ENCODE measurements at regions of chr22 and their contacts with region 1.

Region 1: DNA sequence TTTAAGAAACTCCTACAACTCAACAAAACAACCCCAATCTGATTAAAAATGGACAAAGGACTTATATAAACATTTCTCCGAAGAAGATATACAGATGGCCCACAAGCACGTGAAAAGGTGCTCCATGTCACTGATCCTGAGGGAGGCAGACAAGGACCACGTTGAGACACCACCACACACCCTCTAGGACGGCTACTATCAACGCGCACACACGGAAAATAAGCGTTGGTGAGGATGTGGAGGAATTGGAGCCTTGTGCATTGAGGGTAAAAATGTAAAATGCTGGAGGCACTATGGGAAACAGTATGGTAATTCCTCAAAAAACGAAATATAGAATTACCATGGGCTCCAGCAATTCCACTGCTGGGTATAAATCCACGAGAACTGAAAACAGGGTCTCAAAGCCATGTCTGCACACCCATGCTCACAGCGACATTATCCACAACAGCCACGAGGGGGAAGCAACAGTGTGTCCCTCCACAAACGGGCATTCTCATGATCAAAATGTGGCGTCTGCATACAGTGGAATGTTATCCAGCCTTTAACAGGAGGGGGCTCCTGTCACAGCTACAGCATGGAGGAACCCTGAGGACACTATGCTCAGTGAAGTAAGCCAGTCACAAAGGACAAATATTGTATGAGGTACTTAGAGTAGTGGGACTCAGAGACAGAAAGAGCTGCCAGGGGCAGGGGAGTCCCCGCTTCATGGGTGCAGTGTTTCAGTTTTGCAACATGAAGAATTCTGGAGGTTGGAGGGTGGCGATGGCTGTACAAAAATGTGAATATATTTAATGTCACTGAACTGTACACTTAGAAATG is 22.5 kb downstream of the YPEL1 start:
- DNase-seq: peak; percentile 22 to 61 (median 44)
- ATAC-seq: peak; percentile 92
- H3K4me3 ChIP-seq: no peak overlapping the region
- H3K4me3 Mint-ChIP-seq: peak overlapping the region in 5 of 10 donors; percentile 39 to 66 (median 50)
- H3K27ac ChIP-seq: no peak overlapping the region
- H3K27ac Mint-ChIP-seq: no peak overlapping the region
- H3K4me1 ChIP-seq: peaks cover 0 to 4% of the 10 kb centered on the region in 2 donors
- H3K4me1 Mint-ChIP-seq: peaks cover 0 to 6% (median 5%) of the 10 kb centered on the region in 7 donors
- H3K27me3 ChIP-seq: no peaks in the 10 kb centered on the region
- H3K27me3 Mint-ChIP-seq: no peaks in the 10 kb centered on the region

Region 2: DNA sequence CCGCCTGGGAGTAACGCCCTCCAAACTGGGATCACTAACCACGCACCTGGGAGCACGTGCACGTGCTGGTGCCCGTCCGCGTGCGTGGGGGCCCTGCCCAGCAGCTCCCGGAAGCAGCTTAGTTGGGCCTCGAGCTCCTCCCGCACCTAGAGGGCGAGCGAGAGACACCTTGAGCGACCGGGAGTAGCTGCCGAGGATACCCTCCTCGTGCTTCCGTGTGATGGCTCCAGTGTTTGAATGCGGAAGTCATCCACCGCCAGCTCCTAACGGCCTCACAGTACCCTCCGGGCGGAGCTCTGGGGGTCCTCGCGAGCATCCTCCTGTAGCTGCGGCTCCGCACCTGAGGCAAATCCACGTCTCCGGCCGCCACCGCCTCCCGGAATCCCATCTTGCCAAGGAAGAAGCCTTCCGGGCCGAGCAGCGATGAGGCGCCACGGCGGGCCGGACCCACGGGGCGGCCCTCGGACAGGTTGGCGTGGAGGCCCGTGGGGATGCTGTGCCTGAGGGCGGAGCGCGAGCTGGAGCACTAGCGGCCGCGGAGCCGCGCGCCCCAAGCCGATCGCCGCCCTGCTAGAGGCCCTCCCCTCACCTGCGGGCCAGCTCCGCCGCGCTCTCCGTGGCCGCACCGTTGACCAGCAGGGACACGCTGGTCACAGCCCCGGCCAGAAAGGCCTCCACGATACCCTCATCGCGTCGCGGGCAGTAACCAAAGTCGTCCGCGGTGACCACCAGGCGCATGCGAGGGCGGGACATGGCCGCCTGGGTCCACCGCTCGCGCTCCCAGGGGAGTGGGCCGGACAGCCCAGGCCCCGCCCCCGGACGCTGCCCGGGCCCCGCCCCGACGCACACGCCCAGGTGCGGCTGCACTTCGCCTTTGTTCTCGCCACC is 83.6 kb before region 1 on chr22 and contains the start of gene YDJC:
- CTCF ChIA-PET with region 1: no interaction called
- POLR2A ChIA-PET with region 1: no interaction called
- intact Hi-C with region 1: no loop called
- DNase-seq: peak; percentile 88 to 97 (median 93)
- ATAC-seq: peak; percentile 95
- H3K4me3 ChIP-seq: peak within 1 kb of the TSS; percentile 88
- H3K4me3 Mint-ChIP-seq: peak within 1 kb of the TSS; percentile 87 to 97 (median 91)
- H3K27ac ChIP-seq: peak within 1 kb of the TSS; percentile 92
- H3K27ac Mint-ChIP-seq: peak within 1 kb of the TSS; percentile 84 to 97 (median 93)
- H3K4me1 ChIP-seq: peaks cover 6 to 26% of the 10 kb centered on the region in 2 donors
- H3K4me1 Mint-ChIP-seq: peaks cover 29 to 44% (median 38%) of the 10 kb centered on the region in 7 donors
- H3K27me3 ChIP-seq: no peaks in the 10 kb centered on the region
- H3K27me3 Mint-ChIP-seq: no peaks in the 10 kb centered on the region
- total RNA-seq, gene YDJC: 29.0 to 56.0 (median 38.0) TPM

Region 3: GRCh38 chr22:21726650-21727049 is 13.5 kb after region 1 on chr22:
- CTCF ChIA-PET with region 1: no interaction called
- POLR2A ChIA-PET with region 1: interaction called, 5 read pairs
- intact Hi-C with region 1: loop called in 1 of 2 experiments (anchors 2 kb)
- DNase-seq: peak in 3 of 9 donors; percentile 11 to 36 (median 19)
- ATAC-seq: peak; percentile 82
- H3K4me3 ChIP-seq: no peak overlapping the region
- H3K4me3 Mint-ChIP-seq: no peak overlapping the region
- H3K27ac ChIP-seq: no peak overlapping the region
- H3K27ac Mint-ChIP-seq: no peak overlapping the region
- H3K4me1 ChIP-seq: peaks cover 0 to 11% of the 10 kb centered on the region in 2 donors
- H3K4me1 Mint-ChIP-seq: peaks cover 3 to 9% (median 6%) of the 10 kb centered on the region in 7 donors
- H3K27me3 ChIP-seq: no peaks in the 10 kb centered on the region
- H3K27me3 Mint-ChIP-seq: no peaks in the 10 kb centered on the region

Region 4: GRCh38 chr22:21766691-21767462 is 53.8 kb after region 1 on chr22:
- CTCF ChIA-PET with region 1: no interaction called
- POLR2A ChIA-PET with region 1: no interaction called
- intact Hi-C with region 1: loop called in 1 of 2 experiments (anchors 10 kb)
- DNase-seq: peak in 1 of 9 donors; percentile 68
- ATAC-seq: peak; percentile 82
- H3K4me3 ChIP-seq: peak overlapping the region; percentile 14
- H3K4me3 Mint-ChIP-seq: peak overlapping the region in 2 of 10 donors; percentile 39 to 59
- H3K27ac ChIP-seq: no peak overlapping the region
- H3K27ac Mint-ChIP-seq: peak overlapping the region in 8 of 9 donors; percentile 36 to 80 (median 57)
- H3K4me1 ChIP-seq: peaks cover 0 to 66% of the 10 kb centered on the region in 2 donors
- H3K4me1 Mint-ChIP-seq: peaks cover 6 to 61% (median 20%) of the 10 kb centered on the region in 7 donors
- H3K27me3 ChIP-seq: no peaks in the 10 kb centered on the region
- H3K27me3 Mint-ChIP-seq: no peaks in the 10 kb centered on the region

Region 5: DNA sequence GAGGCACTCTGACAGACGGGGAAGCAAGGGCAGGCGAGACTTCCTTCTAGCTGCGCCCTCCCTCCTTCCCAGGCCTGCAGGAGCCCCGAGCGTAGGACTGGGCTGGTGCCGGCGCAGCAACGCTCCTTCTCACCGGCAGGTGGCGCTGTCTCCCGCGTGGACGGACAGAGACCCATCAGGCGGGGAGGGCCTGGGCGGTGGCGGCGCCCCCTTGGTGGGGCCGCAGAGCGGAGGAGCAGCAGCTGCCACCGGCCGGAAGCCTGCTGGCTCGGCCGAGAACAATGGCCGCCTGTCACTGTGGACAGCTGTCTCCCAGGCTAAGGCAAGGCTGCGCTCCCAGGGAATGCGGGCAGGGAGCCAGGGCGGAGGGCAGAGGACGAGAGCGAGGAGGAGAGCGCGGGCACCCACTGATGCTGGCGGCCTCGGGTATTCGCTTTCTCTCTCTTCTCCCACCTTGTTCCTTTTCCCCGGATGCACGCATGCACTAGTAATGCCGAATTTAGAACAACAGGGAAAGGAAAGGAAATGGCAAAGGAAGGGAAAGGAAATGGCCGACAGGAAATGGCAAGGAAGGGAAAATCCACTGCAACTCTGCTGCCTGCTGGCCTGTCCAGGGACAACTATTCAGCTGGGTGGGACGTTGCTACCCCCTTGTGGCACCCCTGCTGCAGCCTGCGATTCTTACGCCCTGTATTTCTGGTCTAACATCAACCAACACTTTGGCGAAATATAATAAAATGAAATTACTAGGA is 225.1 kb after region 1 on chr22:
- CTCF ChIA-PET with region 1: interaction called, 3 read pairs
- POLR2A ChIA-PET with region 1: no interaction called
- intact Hi-C with region 1: loop called (anchors 1 to 5 kb)
- DNase-seq: peak; percentile 76 to 95 (median 87)
- ATAC-seq: peak; percentile 94
- H3K4me3 ChIP-seq: peak overlapping the region; percentile 69
- H3K4me3 Mint-ChIP-seq: peak overlapping the region; percentile 72 to 84 (median 80)
- H3K27ac ChIP-seq: peak overlapping the region; percentile 60
- H3K27ac Mint-ChIP-seq: peak overlapping the region; percentile 33 to 90 (median 81)
- H3K4me1 ChIP-seq: peaks cover 12 to 13% of the 10 kb centered on the region in 2 donors
- H3K4me1 Mint-ChIP-seq: peaks cover 20 to 55% (median 48%) of the 10 kb centered on the region in 7 donors
- H3K27me3 ChIP-seq: no peaks in the 10 kb centered on the region
- H3K27me3 Mint-ChIP-seq: no peaks in the 10 kb centered on the region

Region 6: GRCh38 chr22:21952586-21953571 is 239.8 kb after region 1 on chr22 and contains the start of gene PPM1F:
- CTCF ChIA-PET with region 1: interaction called, 5 read pairs
- POLR2A ChIA-PET with region 1: no interaction called
- intact Hi-C with region 1: loop called (anchors 2 kb)
- DNase-seq: peak; percentile 79 to 100 (median 92)
- ATAC-seq: peak; percentile 98
- H3K4me3 ChIP-seq: peak within 1 kb of the TSS; percentile 79
- H3K4me3 Mint-ChIP-seq: peak within 1 kb of the TSS; percentile 80 to 90 (median 88)
- H3K27ac ChIP-seq: peak within 1 kb of the TSS; percentile 78
- H3K27ac Mint-ChIP-seq: peak within 1 kb of the TSS in 8 of 9 donors; percentile 43 to 80 (median 72)
- H3K4me1 ChIP-seq: peaks cover 7% of the 10 kb centered on the region in 2 donors
- H3K4me1 Mint-ChIP-seq: peaks cover 16 to 25% (median 19%) of the 10 kb centered on the region in 7 donors
- H3K27me3 ChIP-seq: no peaks in the 10 kb centered on the region
- H3K27me3 Mint-ChIP-seq: no peaks in the 10 kb centered on the region
- total RNA-seq, gene PPM1F: 21.3 to 58.0 (median 27.8) TPM